ENCODE measurements at regions of chr1 and their contacts with region 1.

Region 1: DNA sequence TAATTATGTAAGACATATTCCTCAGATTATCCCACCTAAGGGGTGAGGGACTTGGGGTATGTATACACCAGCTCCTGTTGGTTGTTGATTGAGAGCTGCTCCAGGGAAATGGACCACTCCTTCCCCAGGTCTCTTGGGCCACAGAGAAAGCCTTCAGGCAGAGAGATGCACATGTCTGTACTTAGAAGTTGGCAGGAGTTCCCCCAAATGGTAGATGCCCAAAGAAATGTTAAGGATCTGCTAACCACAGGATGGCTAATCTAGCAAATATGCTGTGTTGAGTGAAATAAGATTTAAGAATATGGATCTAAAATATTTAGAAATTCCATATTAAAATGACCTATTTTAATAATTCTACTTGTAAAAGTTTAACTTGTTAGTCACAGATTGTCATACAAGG is 100.8 kb upstream of the DNAH14 start:
- DNase-seq: no peak
- H3K4me3 ChIP-seq: no peak overlapping the region
- H3K27ac ChIP-seq: no peak overlapping the region
- H3K4me1 ChIP-seq: no peaks in the 10 kb centered on the region
- H3K27me3 ChIP-seq: no peaks in the 10 kb centered on the region
- CTCF ChIP-seq: no peak
- EP300 ChIP-seq: no peak
- POLR2A ChIP-seq: no peak

Region 2: GRCh38 chr1:224668984-224669383 is 159.7 kb before region 1 on chr1:
- in situ Hi-C with region 1: loop called in 1 of 4 experiments (anchors 25 kb)
- intact Hi-C with region 1: no loop called
- DNase-seq: no peak
- H3K4me3 ChIP-seq: no peak overlapping the region
- H3K27ac ChIP-seq: no peak overlapping the region
- H3K4me1 ChIP-seq: no peaks in the 10 kb centered on the region
- H3K27me3 ChIP-seq: no peaks in the 10 kb centered on the region
- CTCF ChIP-seq: no peak
- EP300 ChIP-seq: no peak
- POLR2A ChIP-seq: no peak

Region 3: GRCh38 chr1:224851210-224851847 is 22.6 kb after region 1 on chr1:
- in situ Hi-C with region 1: no loop called
- intact Hi-C with region 1: no loop called
- DNase-seq: peak; percentile 68
- H3K4me3 ChIP-seq: no peak overlapping the region
- H3K27ac ChIP-seq: no peak overlapping the region
- H3K4me1 ChIP-seq: no peaks in the 10 kb centered on the region
- H3K27me3 ChIP-seq: no peaks in the 10 kb centered on the region
- CTCF ChIP-seq: peak; percentile 49 to 68 (median 63)
- EP300 ChIP-seq: no peak
- POLR2A ChIP-seq: no peak